H1 (cell line): ENCODE measurements at regions of chr2 and their contacts with region 1.

Region 1: GRCh38 chr2:10864861-10865636 is 46.7 kb upstream of the KCNF1 start:
- DNase-seq: no peak
- H3K4me3 ChIP-seq: no peak overlapping the region
- H3K27ac ChIP-seq: no peak overlapping the region
- H3K4me1 ChIP-seq: peaks cover 0 to 3% (median 0%) of the 10 kb centered on the region in 4 experiments; a peak in 1 of 7 replicates
- H3K27me3 ChIP-seq: no peaks in the 10 kb centered on the region
- CTCF ChIP-seq: peak in 1 of 3 experiments; percentile 22; a peak in 1 of 4 replicates
- EP300 ChIP-seq: no peak
- POLR2A ChIP-seq: no peak
- RAD21 ChIP-seq: no peak

Region 2: DNA sequence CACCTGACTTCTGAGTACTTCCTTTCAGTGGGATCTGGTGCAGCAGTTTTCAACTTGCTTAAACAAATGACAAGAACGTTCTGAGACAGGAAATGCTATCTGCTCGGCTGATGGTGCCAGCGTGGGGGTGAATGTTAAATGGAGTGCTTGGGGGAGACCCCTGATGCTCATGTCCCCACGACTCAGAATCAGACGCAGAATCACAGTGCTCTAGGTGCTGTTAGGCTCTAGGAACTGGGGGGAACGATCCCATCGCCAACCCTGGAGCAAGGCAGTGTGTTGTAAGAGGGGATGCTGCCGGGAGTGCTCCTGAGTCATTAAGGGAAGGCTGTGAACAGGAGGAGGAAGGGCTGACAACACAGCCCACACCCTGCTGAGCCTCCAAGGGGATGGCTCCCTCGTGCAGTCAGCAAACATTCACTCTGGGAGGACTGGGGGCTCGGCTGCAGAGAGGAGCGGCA is 12.6 kb after region 1 on chr2:
- CTCF ChIA-PET with region 1: interaction called, 15 read pairs
- POLR2A ChIA-PET with region 1: no interaction called
- DNase-seq: no peak
- H3K4me3 ChIP-seq: no peak overlapping the region
- H3K27ac ChIP-seq: no peak overlapping the region
- H3K4me1 ChIP-seq: peaks cover 0 to 7% (median 0%) of the 10 kb centered on the region in 4 experiments; a peak in 1 of 7 replicates
- H3K27me3 ChIP-seq: no peaks in the 10 kb centered on the region
- CTCF ChIP-seq: no peak
- EP300 ChIP-seq: no peak
- POLR2A ChIP-seq: no peak
- RAD21 ChIP-seq: no peak

Region 3: DNA sequence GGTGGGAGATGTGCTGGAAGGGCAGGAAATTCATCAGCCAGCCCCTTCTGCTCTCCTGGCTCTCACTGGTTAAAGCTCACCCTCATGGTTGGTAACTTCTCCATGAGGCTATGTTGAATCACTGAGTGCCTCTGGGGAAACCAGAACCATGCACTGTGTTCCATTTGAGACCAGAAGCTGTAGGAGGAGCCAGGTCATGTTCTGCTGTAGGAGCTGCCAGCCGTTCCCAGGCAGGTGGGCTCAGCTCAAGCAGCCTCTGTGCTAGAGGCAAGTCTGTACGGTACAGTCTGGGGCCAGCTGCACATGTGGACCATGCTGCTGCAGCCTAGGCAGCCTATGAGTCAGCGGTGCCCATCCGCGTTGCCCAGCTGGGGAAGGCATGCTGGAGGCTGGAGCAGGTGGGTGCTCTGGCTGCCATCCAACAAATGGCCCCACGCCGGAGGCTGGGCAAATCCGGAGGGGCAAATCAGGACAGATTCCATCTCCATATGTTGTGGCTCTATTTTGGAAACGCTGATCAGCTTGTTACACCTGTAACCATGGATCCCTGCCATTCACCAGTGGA is 24.7 kb after region 1 on chr2:
- CTCF ChIA-PET with region 1: interaction called, 11 read pairs
- POLR2A ChIA-PET with region 1: no interaction called
- DNase-seq: no peak
- H3K4me3 ChIP-seq: no peak overlapping the region
- H3K27ac ChIP-seq: no peak overlapping the region
- H3K4me1 ChIP-seq: peaks cover under 1 to 6% (median 2%) of the 10 kb centered on the region in 4 experiments; a peak in 4 of 7 replicates
- H3K27me3 ChIP-seq: no peaks in the 10 kb centered on the region
- CTCF ChIP-seq: no peak
- EP300 ChIP-seq: no peak
- POLR2A ChIP-seq: no peak
- RAD21 ChIP-seq: no peak

Region 4: GRCh38 chr2:11017921-11018320 is 152.9 kb after region 1 on chr2:
- CTCF ChIA-PET with region 1: no interaction called
- POLR2A ChIA-PET with region 1: no interaction called
- DNase-seq: no peak
- H3K4me3 ChIP-seq: no peak overlapping the region
- H3K27ac ChIP-seq: no peak overlapping the region
- H3K4me1 ChIP-seq: peaks cover 0 to 2% (median under 1%) of the 10 kb centered on the region in 4 experiments; a peak in 3 of 7 replicates
- H3K27me3 ChIP-seq: no peaks in the 10 kb centered on the region
- CTCF ChIP-seq: no peak
- EP300 ChIP-seq: no peak
- POLR2A ChIP-seq: no peak
- RAD21 ChIP-seq: no peak